SK-N-SH (cell line): ENCODE measurements at regions of chr4 and their contacts with region 1.

Region 1: GRCh38 chr4:3880615-3881120 is 114.5 kb downstream of the ADRA2C start:
- DNase-seq: peak; percentile 89
- H3K4me3 ChIP-seq: no peak overlapping the region; a peak in 1 of 4 replicates
- H3K27ac ChIP-seq: no peak overlapping the region
- H3K4me1 ChIP-seq: peaks cover 0 to 4% of the 10 kb centered on the region in 2 experiments; a peak in 1 of 4 replicates
- H3K27me3 ChIP-seq: peaks cover 10% of the 10 kb centered on the region; the same call in 1 of the 2 replicates
- CTCF ChIP-seq: peak; percentile 68
- EP300 ChIP-seq: no peak
- RAD21 ChIP-seq: peak; percentile 87

Region 2: DNA sequence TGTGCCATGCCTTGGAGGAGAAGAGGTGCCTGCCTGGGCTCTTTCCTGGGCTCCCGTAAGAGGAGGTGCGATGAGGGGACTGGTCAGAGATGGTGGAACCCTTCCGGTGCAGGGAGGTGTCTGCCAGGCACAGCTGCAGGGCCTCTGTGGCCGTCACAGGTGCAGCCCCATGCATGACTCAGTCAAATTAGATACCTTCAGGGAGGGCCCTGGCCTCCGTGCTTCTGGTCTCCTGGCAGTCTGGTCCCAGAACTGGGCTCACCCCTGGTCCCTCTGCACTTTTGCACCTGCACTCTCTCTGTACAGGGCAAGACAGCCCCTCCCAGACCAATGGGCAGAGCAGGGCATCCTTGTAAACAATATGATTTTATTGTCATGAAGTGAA is 298.6 kb before region 1 on chr4:
- CTCF ChIA-PET with region 1: no interaction called
- POLR2A ChIA-PET with region 1: no interaction called
- DNase-seq: no peak
- H3K4me3 ChIP-seq: no peak overlapping the region
- H3K27ac ChIP-seq: no peak overlapping the region
- H3K4me1 ChIP-seq: peaks cover 0 to 23% of the 10 kb centered on the region in 2 experiments; a peak in 1 of 4 replicates
- H3K27me3 ChIP-seq: no peaks in the 10 kb centered on the region
- CTCF ChIP-seq: no peak
- EP300 ChIP-seq: no peak
- RAD21 ChIP-seq: no peak

Region 3: DNA sequence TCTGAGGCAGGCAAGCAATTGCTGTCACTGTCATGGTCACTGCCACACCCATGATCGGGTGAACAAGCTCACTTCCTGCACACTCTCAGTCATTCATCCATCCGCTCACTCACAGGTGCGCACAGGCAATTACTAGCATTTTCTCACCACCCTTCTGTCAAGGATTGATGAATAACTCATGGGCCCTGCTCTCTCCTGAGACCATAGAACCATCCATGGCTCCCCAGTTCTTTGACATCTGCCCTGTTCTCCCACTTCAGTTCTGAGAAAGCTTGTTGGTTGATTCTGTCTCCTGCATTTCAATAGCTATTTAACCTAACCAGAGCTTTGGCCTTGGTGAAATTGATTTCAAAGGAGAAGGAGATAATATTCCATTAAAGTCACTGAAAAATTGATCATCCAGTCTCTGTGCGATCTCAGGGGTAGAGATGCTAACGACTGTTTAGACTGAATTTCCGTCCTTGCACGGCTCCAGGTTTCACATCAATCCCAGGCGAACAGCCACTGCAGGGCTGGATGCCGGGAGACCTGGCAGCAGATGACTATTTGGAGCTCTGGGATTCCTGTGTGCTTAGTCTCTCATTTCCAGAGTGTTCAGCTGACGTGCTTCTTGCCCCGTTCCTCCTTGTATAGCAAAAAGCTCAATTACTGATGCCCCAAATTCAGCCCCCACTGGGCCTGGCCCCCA is 151.3 kb before region 1 on chr4:
- CTCF ChIA-PET with region 1: no interaction called
- POLR2A ChIA-PET with region 1: no interaction called
- DNase-seq: no peak
- H3K4me3 ChIP-seq: no peak overlapping the region
- H3K27ac ChIP-seq: no peak overlapping the region
- H3K4me1 ChIP-seq: peaks cover 0 to 16% of the 10 kb centered on the region in 2 experiments; a peak in 1 of 4 replicates
- H3K27me3 ChIP-seq: no peaks in the 10 kb centered on the region
- CTCF ChIP-seq: no peak
- EP300 ChIP-seq: no peak
- RAD21 ChIP-seq: no peak

Region 4: GRCh38 chr4:3747581-3747904 is 133.1 kb before region 1 on chr4:
- CTCF ChIA-PET with region 1: interaction called, 29 read pairs
- POLR2A ChIA-PET with region 1: no interaction called
- DNase-seq: no peak
- H3K4me3 ChIP-seq: no peak overlapping the region
- H3K27ac ChIP-seq: no peak overlapping the region
- H3K4me1 ChIP-seq: peaks cover 0 to 15% of the 10 kb centered on the region in 2 experiments; a peak in 2 of 4 replicates
- H3K27me3 ChIP-seq: no peaks in the 10 kb centered on the region
- CTCF ChIP-seq: no peak
- EP300 ChIP-seq: no peak
- RAD21 ChIP-seq: peak; percentile 31; the same call in 1 of the 2 replicates

Region 5: GRCh38 chr4:3765271-3766040 is 115.2 kb before region 1 on chr4:
- CTCF ChIA-PET with region 1: interaction called, 159 read pairs
- POLR2A ChIA-PET with region 1: interaction called, 5 read pairs
- DNase-seq: peak; percentile 91
- H3K4me3 ChIP-seq: peak overlapping the region in 1 of 2 experiments; percentile 40; a peak in 2 of 4 replicates
- H3K27ac ChIP-seq: peak overlapping the region in 1 of 2 experiments; percentile 47; a peak in 2 of 4 replicates
- H3K4me1 ChIP-seq: peaks cover 0 to 13% of the 10 kb centered on the region in 2 experiments; a peak in 1 of 4 replicates
- H3K27me3 ChIP-seq: no peaks in the 10 kb centered on the region
- CTCF ChIP-seq: no peak; the same call in 1 of the 2 replicates
- EP300 ChIP-seq: no peak
- RAD21 ChIP-seq: peak; percentile 26; the same call in 1 of the 2 replicates

Region 6: DNA sequence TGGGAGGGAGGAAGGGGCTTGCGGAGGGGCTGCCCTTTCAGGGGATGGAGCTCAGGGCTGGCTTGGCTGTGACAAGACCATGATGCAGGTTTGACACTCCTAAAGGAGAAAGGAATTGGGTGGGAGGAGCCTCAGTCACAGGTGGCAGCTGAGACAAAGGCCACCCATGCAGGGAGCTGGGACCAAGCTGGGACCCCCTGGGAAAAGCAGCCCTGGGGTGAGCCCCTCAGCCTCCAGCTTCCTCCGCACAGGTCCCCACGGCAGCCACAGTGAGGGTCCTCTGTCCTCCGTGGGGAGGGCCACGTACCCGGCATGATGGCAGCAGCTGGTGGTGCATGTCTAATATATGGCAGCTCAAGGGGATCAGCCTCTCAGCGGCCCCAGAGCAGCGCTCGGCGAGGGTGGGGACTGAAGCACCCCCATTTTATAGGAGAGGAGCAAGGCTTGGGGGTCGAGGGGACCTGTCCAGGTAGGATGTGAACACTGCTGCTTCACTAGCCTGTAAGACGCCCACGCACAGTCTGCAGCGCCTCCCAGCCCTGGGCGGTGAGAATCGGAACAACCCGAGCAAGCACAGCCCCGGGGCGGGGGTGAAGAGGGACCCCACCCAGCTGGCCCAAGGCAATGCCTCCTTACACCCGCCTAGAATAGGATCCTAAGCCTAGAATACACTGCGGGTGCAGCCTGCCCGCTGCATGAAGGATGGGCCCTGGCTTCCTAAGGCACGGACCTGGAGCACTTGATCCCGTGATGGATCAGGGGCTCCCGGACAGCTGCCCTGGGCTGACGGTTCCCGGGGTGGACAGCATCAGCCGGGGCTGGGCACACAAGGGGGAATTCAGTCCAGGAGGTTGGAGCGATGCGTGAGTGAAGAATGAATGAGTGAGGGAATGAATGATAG is 97.0 kb before region 1 on chr4:
- CTCF ChIA-PET with region 1: interaction called, 144 read pairs
- POLR2A ChIA-PET with region 1: interaction called, 5 read pairs
- DNase-seq: no peak
- H3K4me3 ChIP-seq: no peak overlapping the region
- H3K27ac ChIP-seq: no peak overlapping the region; a peak in 1 of 4 replicates
- H3K4me1 ChIP-seq: peaks cover 0 to 62% of the 10 kb centered on the region in 2 experiments; a peak in 2 of 4 replicates
- H3K27me3 ChIP-seq: no peaks in the 10 kb centered on the region
- CTCF ChIP-seq: no peak
- EP300 ChIP-seq: no peak
- RAD21 ChIP-seq: no peak

Region 7: GRCh38 chr4:3827616-3828492 is 52.8 kb before region 1 on chr4:
- CTCF ChIA-PET with region 1: interaction called, 14 read pairs
- POLR2A ChIA-PET with region 1: no interaction called
- DNase-seq: peak; percentile 93
- H3K4me3 ChIP-seq: no peak overlapping the region
- H3K27ac ChIP-seq: peak overlapping the region in 1 of 2 experiments; percentile 83; a peak in 2 of 4 replicates
- H3K4me1 ChIP-seq: peaks cover 0 to 37% of the 10 kb centered on the region in 2 experiments; a peak in 2 of 4 replicates
- H3K27me3 ChIP-seq: no peaks in the 10 kb centered on the region
- CTCF ChIP-seq: no peak
- EP300 ChIP-seq: no peak
- RAD21 ChIP-seq: no peak

Region 8: GRCh38 chr4:3868211-3869173 is 12.2 kb before region 1 on chr4:
- CTCF ChIA-PET with region 1: interaction called, 17 read pairs
- POLR2A ChIA-PET with region 1: no interaction called
- DNase-seq: no peak
- H3K4me3 ChIP-seq: no peak overlapping the region
- H3K27ac ChIP-seq: no peak overlapping the region
- H3K4me1 ChIP-seq: peaks cover 0 to 3% of the 10 kb centered on the region in 2 experiments; a peak in 1 of 4 replicates
- H3K27me3 ChIP-seq: no peaks in the 10 kb centered on the region; the same call in 1 of the 2 replicates
- CTCF ChIP-seq: no peak
- EP300 ChIP-seq: no peak
- RAD21 ChIP-seq: no peak